Cardiac septum (tissue), 1 donor: ENCODE measurements at regions of chr16 and their contacts with region 1.

Region 1: GRCh38 chr16:11497851-11498289 is 88.8 kb downstream of the LITAF start:
- DNase-seq: no peak

Region 2: GRCh38 chr16:11597239-11598101 is 99.6 kb after region 1 on chr16:
- intact Hi-C with region 1: loop called (anchors 10 kb)
- DNase-seq: no peak